GM23248 (cell line): ENCODE measurements at regions of chr3 and their contacts with region 1.

Region 1: DNA sequence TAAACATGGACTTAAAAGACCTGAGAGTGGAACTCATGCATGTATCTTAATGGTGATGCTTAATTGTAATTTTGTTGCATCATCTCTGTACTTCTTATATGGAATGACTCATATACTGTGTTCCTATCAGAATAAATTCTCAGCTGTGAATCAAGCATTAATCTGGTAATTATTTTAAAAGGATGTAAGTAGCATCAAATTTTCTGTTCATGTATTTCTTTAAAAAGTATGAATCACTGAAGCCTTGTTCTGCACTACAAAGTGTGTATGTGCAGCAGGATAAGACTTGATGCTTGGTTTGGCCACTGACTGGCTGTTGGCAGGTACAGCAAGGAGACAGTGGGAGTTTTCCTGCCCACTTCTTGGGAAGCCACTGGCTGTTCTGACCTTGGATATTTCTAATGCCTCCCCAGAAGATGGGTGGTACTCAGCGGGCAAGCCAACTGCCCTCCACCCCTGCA is 123.9 kb downstream of the ANO10 start:
- DNase-seq: peak; percentile 61
- H3K4me3 ChIP-seq: no peak overlapping the region
- H3K27ac ChIP-seq: peak overlapping the region; percentile 23; the same call in 1 of the 2 replicates
- H3K4me1 ChIP-seq: peaks cover 18% of the 10 kb centered on the region
- H3K27me3 ChIP-seq: no peaks in the 10 kb centered on the region

Region 2: GRCh38 chr3:42572278-42572677 is 925.7 kb before region 1 on chr3:
- in situ Hi-C with region 1: no loop called
- DNase-seq: peak; percentile 58
- H3K4me3 ChIP-seq: no peak overlapping the region
- H3K27ac ChIP-seq: no peak overlapping the region
- H3K4me1 ChIP-seq: no peaks in the 10 kb centered on the region
- H3K27me3 ChIP-seq: no peaks in the 10 kb centered on the region

Region 3: GRCh38 chr3:43113671-43114070 is 384.3 kb before region 1 on chr3:
- in situ Hi-C with region 1: no loop called
- DNase-seq: no peak
- H3K4me3 ChIP-seq: no peak overlapping the region
- H3K27ac ChIP-seq: no peak overlapping the region
- H3K4me1 ChIP-seq: no peaks in the 10 kb centered on the region
- H3K27me3 ChIP-seq: peaks cover 6% of the 10 kb centered on the region

Region 4: DNA sequence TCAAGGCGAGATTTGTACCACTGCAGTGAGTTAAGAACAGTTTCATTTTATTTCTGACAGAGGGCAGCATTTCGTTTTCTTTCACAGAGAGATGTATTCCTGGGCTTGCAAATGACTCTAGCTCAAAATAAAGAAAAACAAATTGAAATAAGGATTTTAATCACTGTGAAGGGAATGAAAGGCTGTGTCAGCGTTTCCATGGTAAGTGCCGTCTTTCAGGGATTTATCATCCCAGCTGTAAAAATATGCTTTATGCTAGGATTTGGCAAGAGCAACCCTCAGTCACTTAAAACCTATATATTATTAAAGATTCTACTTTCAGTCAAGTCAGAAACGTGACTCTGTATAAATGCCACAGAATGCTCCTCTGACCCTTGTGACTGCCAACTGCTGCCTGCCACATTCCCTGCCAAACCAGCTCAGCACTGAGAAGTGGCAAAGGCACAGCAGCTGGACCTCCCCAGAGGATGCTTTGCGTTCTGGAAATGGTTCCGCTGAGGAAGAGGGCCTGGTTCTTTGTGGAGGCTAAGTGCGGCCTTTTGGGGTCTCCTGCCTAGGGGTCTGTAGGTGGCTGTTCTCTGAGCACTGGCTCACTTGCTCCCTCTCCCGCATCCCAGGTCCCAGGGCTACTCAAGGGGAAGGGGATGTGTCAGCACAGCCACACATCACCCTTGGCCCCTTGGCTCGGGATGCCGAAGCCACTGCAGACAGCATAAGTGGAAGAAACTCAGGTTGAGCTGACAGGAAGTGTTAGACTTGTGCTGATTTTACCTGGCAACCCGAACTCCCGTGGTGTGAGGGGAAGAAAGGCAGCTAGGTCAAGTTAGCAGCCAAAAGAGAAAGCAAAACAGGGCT is 335.5 kb before region 1 on chr3:
- in situ Hi-C with region 1: loop called (anchors 10 kb)
- DNase-seq: peak; percentile 70
- H3K4me3 ChIP-seq: no peak overlapping the region
- H3K27ac ChIP-seq: no peak overlapping the region
- H3K4me1 ChIP-seq: no peaks in the 10 kb centered on the region
- H3K27me3 ChIP-seq: no peaks in the 10 kb centered on the region

Region 5: DNA sequence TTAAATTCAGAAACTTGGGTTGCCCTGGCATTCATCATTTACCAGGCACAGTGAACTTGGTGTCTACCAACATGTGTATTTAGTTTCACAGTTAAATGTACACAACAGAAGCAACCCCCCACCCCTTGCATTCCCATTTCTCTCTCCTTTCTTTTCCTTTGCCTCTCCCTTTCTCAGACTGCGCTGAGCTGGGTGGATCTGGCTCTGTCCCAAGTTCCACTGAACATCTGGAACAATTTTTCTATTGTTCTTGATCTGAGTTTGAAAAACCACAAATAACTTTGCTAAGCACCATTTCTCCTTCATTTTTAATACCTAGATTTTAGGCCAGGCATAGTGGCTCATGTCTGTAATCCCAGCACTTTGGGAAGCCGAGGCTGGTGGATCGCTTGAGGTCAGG is 435.0 kb after region 1 on chr3:
- in situ Hi-C with region 1: no loop called
- DNase-seq: peak; percentile 31
- H3K4me3 ChIP-seq: no peak overlapping the region
- H3K27ac ChIP-seq: no peak overlapping the region
- H3K4me1 ChIP-seq: no peaks in the 10 kb centered on the region
- H3K27me3 ChIP-seq: peaks cover 16% of the 10 kb centered on the region; the same call in 1 of the 2 replicates